Endothelial cell of umbilical vein (primary cell): ENCODE measurements at regions of chr1 and their contacts with region 1.

Region 1: DNA sequence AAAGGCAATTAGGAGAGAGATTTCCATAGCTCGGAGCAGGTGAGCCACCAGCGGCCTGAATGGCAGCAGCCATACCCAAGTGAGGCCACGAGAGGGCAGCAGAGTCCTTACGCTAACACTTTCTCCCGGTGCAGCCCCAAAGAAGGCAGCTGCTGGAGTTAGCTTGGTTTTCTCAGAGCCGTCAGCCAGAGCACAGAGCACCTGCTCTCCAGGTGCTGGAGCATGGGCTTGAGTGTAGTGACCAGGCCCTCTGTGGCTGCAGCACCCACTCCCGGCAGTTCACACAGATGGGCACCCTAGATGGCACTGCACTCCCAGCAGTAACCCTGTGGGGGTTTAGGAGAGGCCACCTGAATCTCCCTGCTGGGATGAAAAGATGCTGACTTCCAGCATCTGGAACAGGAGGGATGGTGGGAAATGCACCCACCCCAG is 45.8 kb downstream of the TMCC2 start:
- DNase-seq: peak; percentile 69
- H3K4me3 ChIP-seq: no peak overlapping the region
- H3K27ac ChIP-seq: no peak overlapping the region
- H3K4me1 ChIP-seq: peaks cover 18% of the 10 kb centered on the region
- H3K27me3 ChIP-seq: no peaks in the 10 kb centered on the region
- CTCF ChIP-seq: peak; percentile 97 to 98
- POLR2A ChIP-seq: no peak

Region 2: GRCh38 chr1:204989266-204990058 is 284.1 kb before region 1 on chr1:
- CTCF ChIA-PET with region 1: interaction called, 11 read pairs
- POLR2A ChIA-PET with region 1: no interaction called
- dilution Hi-C with region 1: no loop called
- intact Hi-C with region 1: no loop called
- DNase-seq: peak; percentile 76
- H3K4me3 ChIP-seq: no peak overlapping the region
- H3K27ac ChIP-seq: no peak overlapping the region
- H3K4me1 ChIP-seq: no peaks in the 10 kb centered on the region
- H3K27me3 ChIP-seq: peaks cover 0 to 19% of the 10 kb centered on the region in 2 experiments
- CTCF ChIP-seq: peak; percentile 92 to 98
- POLR2A ChIP-seq: no peak

Region 3: GRCh38 chr1:205294175-205294913 is 20.8 kb after region 1 on chr1:
- CTCF ChIA-PET with region 1: interaction called, 36 read pairs
- POLR2A ChIA-PET with region 1: interaction called, 4 read pairs
- dilution Hi-C with region 1: no loop called
- intact Hi-C with region 1: no loop called
- DNase-seq: peak; percentile 91
- H3K4me3 ChIP-seq: no peak overlapping the region
- H3K27ac ChIP-seq: peak overlapping the region; percentile 61
- H3K4me1 ChIP-seq: peaks cover 30% of the 10 kb centered on the region
- H3K27me3 ChIP-seq: no peaks in the 10 kb centered on the region
- CTCF ChIP-seq: no peak
- POLR2A ChIP-seq: no peak

Region 4: DNA sequence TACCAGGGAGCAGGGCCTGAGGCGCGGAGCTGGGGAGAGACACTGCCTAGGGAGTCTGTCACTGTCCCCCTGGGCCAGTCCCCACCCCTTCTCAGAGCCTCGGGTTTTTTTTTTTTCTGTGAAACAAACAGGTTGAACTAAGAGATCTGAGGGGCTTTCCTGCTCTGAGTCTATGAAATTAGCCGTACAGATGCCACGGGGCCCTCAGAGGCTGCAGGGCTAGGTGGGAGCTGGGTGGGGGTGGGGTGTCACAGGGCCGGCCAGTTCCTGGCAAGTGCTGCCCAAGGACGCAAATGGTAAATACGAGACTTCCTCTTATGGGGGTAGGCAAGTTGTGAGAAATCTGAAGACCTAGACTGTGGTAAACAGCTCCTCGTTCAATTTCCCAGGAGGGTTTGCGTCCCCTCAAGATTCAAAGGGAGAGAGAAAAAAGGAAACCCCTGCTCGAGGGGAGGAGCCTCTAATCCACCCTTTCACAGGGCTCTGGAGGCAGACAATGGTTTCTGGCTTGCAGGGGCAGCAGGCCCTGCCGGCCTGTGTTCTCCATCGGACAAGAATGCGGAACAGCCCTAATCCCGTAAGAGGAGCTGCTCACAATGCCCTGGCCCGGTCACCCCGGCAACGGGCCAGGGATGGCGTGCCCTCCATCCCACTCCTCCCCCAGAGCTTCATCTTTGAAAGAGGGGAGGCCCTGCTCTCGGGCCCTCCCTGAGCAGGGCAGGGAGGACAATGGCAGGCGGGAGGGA is 40.2 kb after region 1 on chr1:
- CTCF ChIA-PET with region 1: interaction called, 1,536 read pairs
- POLR2A ChIA-PET with region 1: interaction called, 4 read pairs
- dilution Hi-C with region 1: no loop called
- intact Hi-C with region 1: no loop called
- DNase-seq: peak; percentile 67
- H3K4me3 ChIP-seq: no peak overlapping the region
- H3K27ac ChIP-seq: peak overlapping the region; percentile 55
- H3K4me1 ChIP-seq: peaks cover 18% of the 10 kb centered on the region
- H3K27me3 ChIP-seq: no peaks in the 10 kb centered on the region
- CTCF ChIP-seq: no peak
- POLR2A ChIP-seq: no peak

Region 5: GRCh38 chr1:205344066-205344928 is 70.7 kb after region 1 on chr1:
- CTCF ChIA-PET with region 1: interaction called, 15 read pairs
- POLR2A ChIA-PET with region 1: no interaction called
- dilution Hi-C with region 1: no loop called
- intact Hi-C with region 1: no loop called
- DNase-seq: no peak
- H3K4me3 ChIP-seq: no peak overlapping the region
- H3K27ac ChIP-seq: no peak overlapping the region
- H3K4me1 ChIP-seq: no peaks in the 10 kb centered on the region
- H3K27me3 ChIP-seq: peaks cover 53 to 70% of the 10 kb centered on the region in 2 experiments
- CTCF ChIP-seq: no peak
- POLR2A ChIP-seq: no peak